GM12878 (cell line): ENCODE measurements at regions of chr2 and their contacts with region 1.

Region 1: DNA sequence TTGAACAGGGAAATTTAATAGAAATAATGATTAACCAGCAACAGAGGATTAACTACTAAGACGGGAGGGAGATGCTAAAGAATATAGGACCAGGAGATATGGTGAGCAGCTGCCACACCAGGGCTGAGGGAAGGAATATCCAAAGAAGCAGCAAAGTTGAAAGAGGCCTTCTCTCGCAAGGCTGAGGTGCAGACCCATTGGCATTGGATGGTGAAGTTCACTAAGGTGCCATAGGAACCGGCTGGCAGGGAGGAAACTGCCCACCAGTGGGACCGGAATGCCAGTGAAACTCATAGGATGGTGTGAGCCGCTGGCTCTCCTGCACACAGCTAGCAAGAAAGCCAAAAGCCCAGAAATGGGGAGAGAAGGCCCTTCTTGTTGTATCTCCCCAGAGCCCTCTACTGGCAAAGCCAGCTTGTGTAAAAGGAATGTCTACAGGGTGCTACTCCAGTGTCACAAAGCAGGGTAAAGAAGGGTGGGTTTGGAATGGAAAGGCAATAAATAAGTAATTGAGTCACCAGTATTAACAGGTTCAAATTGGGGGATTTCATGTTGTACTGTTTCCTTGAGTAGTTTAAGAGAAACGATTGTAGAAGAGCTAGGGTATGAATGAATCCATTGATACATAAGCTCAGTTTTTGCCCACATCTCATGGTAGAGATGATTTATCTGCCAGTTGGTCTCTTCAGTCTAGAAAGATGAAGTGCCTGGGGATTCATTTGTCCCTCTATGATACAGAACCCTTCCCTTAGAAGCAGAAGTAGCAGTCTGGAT is 36.0 kb downstream of the FARP2 start:
- DNase-seq: no peak
- ATAC-seq: peak; percentile 89
- H3K4me3 ChIP-seq: no peak overlapping the region
- H3K27ac ChIP-seq: 0 out of 2 replicates have a peak overlapping the region, but pooled peaks have one; percentile 18
- H3K4me1 ChIP-seq: peaks cover 42% of the 10 kb centered on the region
- H3K27me3 ChIP-seq: no peaks in the 10 kb centered on the region
- CTCF ChIP-seq: peak; percentile 63 to 68 (median 65)
- EP300 ChIP-seq: no peak
- POLR2A ChIP-seq: no peak
- RAD21 ChIP-seq: peak; percentile 63

Region 2: GRCh38 chr2:241257417-241258032 is 134.6 kb before region 1 on chr2:
- CTCF ChIA-PET with region 1: interaction called, 20 read pairs
- POLR2A ChIA-PET with region 1: no interaction called
- RAD21 ChIA-PET with region 1: interaction called, 10 read pairs
- SMC1A ChIA-PET with region 1: interaction called, 10 read pairs
- in situ Hi-C with region 1: no loop called
- intact Hi-C with region 1: loop called (anchors 10 kb)
- DNase-seq: no peak
- ATAC-seq: no peak
- H3K4me3 ChIP-seq: no peak overlapping the region
- H3K27ac ChIP-seq: no peak overlapping the region
- H3K4me1 ChIP-seq: no peaks in the 10 kb centered on the region
- H3K27me3 ChIP-seq: no peaks in the 10 kb centered on the region
- CTCF ChIP-seq: no peak; a peak in 1 of 6 replicates
- EP300 ChIP-seq: no peak
- POLR2A ChIP-seq: no peak
- RAD21 ChIP-seq: peak; percentile 42

Region 3: GRCh38 chr2:241309684-241310117 is 82.4 kb before region 1 on chr2:
- CTCF ChIA-PET with region 1: interaction called, 15 read pairs
- POLR2A ChIA-PET with region 1: interaction called, 3 read pairs
- RAD21 ChIA-PET with region 1: interaction called, 5 read pairs
- SMC1A ChIA-PET with region 1: interaction called, 28 read pairs
- in situ Hi-C with region 1: no loop called
- intact Hi-C with region 1: no loop called
- DNase-seq: peak; percentile 74
- ATAC-seq: peak; percentile 71
- H3K4me3 ChIP-seq: peak overlapping the region; percentile 64; the same call in 1 of the 2 replicates
- H3K27ac ChIP-seq: peak overlapping the region; percentile 75
- H3K4me1 ChIP-seq: peaks cover 40% of the 10 kb centered on the region
- H3K27me3 ChIP-seq: no peaks in the 10 kb centered on the region
- CTCF ChIP-seq: no peak
- EP300 ChIP-seq: peak; percentile 38 to 81; a peak in 1 of 4 replicates
- POLR2A ChIP-seq: 0 out of 2 replicates have a peak, but pooled peaks have one; percentile 35
- RAD21 ChIP-seq: no peak

Region 4: GRCh38 chr2:241344925-241345651 is 47.0 kb before region 1 on chr2:
- CTCF ChIA-PET with region 1: interaction called, 15 read pairs
- POLR2A ChIA-PET with region 1: interaction called, 3 read pairs
- RAD21 ChIA-PET with region 1: interaction called, 4 read pairs
- SMC1A ChIA-PET with region 1: interaction called, 12 read pairs
- in situ Hi-C with region 1: no loop called
- intact Hi-C with region 1: no loop called
- DNase-seq: no peak
- ATAC-seq: no peak
- H3K4me3 ChIP-seq: no peak overlapping the region
- H3K27ac ChIP-seq: no peak overlapping the region
- H3K4me1 ChIP-seq: no peaks in the 10 kb centered on the region
- H3K27me3 ChIP-seq: no peaks in the 10 kb centered on the region
- CTCF ChIP-seq: no peak
- EP300 ChIP-seq: no peak
- POLR2A ChIP-seq: no peak
- RAD21 ChIP-seq: no peak

Region 5: DNA sequence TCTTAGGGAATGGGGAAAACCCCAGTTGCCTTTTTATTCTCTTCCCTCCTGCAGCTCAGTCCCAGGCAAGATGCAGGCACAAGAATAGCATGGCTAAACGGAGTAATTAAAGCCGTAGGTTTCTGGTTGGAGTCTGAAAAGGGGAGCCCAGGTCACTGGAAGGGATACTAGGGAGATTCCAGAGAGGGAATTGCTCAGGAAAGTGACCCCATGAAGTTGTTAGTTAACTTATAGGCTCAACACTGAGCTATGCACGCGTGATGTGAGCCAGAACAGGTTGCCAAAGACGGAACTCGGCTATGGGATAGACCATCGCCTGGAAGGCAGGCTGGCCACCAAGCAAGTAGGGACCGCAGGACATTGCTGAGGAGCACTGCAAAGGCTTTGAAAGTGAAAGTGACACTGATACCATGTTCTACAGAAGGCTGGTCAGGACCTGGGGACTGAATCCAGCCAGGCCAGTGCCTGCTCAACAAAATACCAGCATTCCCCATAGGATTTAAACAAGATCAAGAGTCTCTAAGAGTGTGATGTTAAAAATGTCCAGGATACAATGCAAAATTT is 28.7 kb before region 1 on chr2:
- CTCF ChIA-PET with region 1: interaction called, 88 read pairs
- POLR2A ChIA-PET with region 1: interaction called, 41 read pairs
- RAD21 ChIA-PET with region 1: interaction called, 75 read pairs
- SMC1A ChIA-PET with region 1: interaction called, 176 read pairs
- in situ Hi-C with region 1: no loop called
- intact Hi-C with region 1: loop called (anchors 1 kb)
- DNase-seq: no peak
- ATAC-seq: peak; percentile 75
- H3K4me3 ChIP-seq: no peak overlapping the region
- H3K27ac ChIP-seq: peak overlapping the region; percentile 24; the same call in 1 of the 2 replicates
- H3K4me1 ChIP-seq: peaks cover 37% of the 10 kb centered on the region
- H3K27me3 ChIP-seq: no peaks in the 10 kb centered on the region
- CTCF ChIP-seq: no peak
- EP300 ChIP-seq: no peak
- POLR2A ChIP-seq: no peak
- RAD21 ChIP-seq: no peak